Activated CD8-positive, alpha-beta T cell treated with anti-CD3 and anti-CD28 coated beads for 36 hours (primary cell): ENCODE measurements at regions of chr14 and their contacts with region 1.

Region 1: GRCh38 chr14:105045710-105046326 is 19.4 kb downstream of the GPR132 start:
- DNase-seq: peak; percentile 96
- ATAC-seq: peak; percentile 92
- H3K4me3 Mint-ChIP-seq: no peak overlapping the region
- H3K27ac Mint-ChIP-seq: peak overlapping the region; percentile 22
- H3K4me1 Mint-ChIP-seq: peaks cover 16% of the 10 kb centered on the region
- H3K27me3 Mint-ChIP-seq: peaks cover 9% of the 10 kb centered on the region
- CTCF ChIP-seq: peak; percentile 100

Region 2: GRCh38 chr14:104976198-104977007 is 69.4 kb before region 1 on chr14:
- CTCF ChIA-PET with region 1: interaction called, 87 read pairs
- POLR2A ChIA-PET with region 1: interaction called, 4 read pairs
- intact Hi-C with region 1: loop called (anchors 1 kb)
- DNase-seq: peak; percentile 87
- ATAC-seq: peak; percentile 85
- H3K4me3 Mint-ChIP-seq: no peak overlapping the region
- H3K27ac Mint-ChIP-seq: no peak overlapping the region
- H3K4me1 Mint-ChIP-seq: peaks cover 11% of the 10 kb centered on the region
- H3K27me3 Mint-ChIP-seq: peaks cover 26% of the 10 kb centered on the region
- CTCF ChIP-seq: peak; percentile 98

Region 3: DNA sequence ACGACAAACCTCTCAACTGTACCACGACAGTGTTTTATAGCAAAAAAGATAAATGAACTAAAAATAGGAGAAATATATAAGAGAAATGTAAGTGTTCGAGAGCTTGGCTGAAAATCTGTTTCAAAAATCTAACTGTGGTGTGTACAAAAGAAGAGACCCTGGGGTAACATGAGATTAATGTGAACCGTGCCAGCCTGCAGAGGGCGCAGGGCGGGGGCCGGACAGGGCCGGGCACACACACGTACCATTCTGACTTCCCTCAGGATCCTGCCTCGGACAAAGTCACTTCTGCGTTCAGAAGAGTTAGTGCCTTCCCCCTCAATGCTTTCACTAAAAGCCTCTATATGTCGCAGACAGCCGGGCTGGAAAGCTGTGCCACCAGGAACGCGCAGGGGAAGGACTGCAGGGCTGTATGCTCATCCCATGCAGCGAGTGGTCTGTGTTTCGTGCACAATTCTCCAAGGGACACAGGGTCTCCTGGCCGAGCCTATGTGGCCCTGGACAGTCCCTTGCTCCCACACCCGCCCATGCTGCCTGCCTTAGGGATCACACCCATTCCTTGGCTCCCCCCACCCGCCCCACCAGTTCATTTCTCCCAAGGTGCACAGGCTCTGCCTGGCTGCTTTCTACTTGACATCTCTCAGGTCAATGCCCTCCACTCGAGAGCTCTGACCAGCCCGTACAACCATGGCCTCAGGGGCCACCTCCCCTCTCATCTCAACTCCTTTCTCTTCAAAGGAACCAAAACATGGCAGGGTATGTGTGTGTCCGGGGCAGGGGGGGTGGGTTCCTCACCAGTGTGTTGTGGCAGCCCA is 33.4 kb before region 1 on chr14:
- CTCF ChIA-PET with region 1: interaction called, 21 read pairs
- POLR2A ChIA-PET with region 1: no interaction called
- intact Hi-C with region 1: no loop called
- DNase-seq: no peak
- ATAC-seq: no peak
- H3K4me3 Mint-ChIP-seq: no peak overlapping the region
- H3K27ac Mint-ChIP-seq: no peak overlapping the region
- H3K4me1 Mint-ChIP-seq: peaks cover 38% of the 10 kb centered on the region
- H3K27me3 Mint-ChIP-seq: no peaks in the 10 kb centered on the region
- CTCF ChIP-seq: no peak

Region 4: DNA sequence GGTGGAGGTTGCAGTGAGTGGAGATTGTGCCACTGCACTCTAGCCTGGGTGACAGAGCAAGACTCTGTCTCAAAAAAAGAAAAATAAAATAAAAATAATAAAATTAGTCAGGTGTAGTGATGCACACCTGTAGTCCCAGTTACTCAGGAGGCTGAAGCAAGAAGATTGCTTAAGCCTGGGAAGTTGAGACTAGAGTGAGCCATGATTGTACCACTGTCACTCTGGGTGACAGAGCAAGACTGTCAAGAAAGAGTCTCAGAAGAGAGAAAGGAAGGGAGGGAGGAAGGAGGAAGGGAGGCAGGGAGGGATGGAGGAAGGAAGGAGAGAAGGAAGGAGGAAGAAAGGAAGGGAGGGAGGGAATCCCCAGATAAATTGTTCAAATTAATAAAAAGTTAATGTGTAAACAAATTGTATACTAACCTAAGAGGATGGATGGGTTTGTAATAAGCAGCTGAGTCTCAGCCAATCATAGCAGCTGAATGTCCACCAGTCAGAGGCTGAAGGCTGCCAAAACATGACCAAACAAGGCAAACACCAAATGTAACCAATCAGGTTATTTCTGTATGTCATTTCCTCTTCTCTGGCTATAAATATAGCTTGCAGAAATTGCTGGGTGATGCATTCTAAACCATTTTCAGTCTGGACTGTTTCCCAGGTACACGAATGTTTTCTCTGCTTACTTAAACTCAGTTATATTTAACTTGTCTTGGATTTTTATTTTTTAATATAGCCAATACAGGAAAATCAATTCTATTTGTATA is 18.8 kb before region 1 on chr14:
- CTCF ChIA-PET with region 1: interaction called, 58 read pairs
- POLR2A ChIA-PET with region 1: interaction called, 5 read pairs
- intact Hi-C with region 1: no loop called
- DNase-seq: no peak
- ATAC-seq: no peak
- H3K4me3 Mint-ChIP-seq: no peak overlapping the region
- H3K27ac Mint-ChIP-seq: peak overlapping the region; percentile 72
- H3K4me1 Mint-ChIP-seq: peaks cover 41% of the 10 kb centered on the region
- H3K27me3 Mint-ChIP-seq: no peaks in the 10 kb centered on the region
- CTCF ChIP-seq: no peak

Region 5: GRCh38 chr14:105059035-105059924 is 13.5 kb after region 1 on chr14:
- CTCF ChIA-PET with region 1: interaction called, 32 read pairs
- POLR2A ChIA-PET with region 1: interaction called, 6 read pairs
- intact Hi-C with region 1: no loop called
- DNase-seq: peak; percentile 90
- ATAC-seq: peak; percentile 65
- H3K4me3 Mint-ChIP-seq: peak overlapping the region; percentile 86
- H3K27ac Mint-ChIP-seq: peak overlapping the region; percentile 96
- H3K4me1 Mint-ChIP-seq: peaks cover 50% of the 10 kb centered on the region
- H3K27me3 Mint-ChIP-seq: no peaks in the 10 kb centered on the region
- CTCF ChIP-seq: peak; percentile 34

Region 6: DNA sequence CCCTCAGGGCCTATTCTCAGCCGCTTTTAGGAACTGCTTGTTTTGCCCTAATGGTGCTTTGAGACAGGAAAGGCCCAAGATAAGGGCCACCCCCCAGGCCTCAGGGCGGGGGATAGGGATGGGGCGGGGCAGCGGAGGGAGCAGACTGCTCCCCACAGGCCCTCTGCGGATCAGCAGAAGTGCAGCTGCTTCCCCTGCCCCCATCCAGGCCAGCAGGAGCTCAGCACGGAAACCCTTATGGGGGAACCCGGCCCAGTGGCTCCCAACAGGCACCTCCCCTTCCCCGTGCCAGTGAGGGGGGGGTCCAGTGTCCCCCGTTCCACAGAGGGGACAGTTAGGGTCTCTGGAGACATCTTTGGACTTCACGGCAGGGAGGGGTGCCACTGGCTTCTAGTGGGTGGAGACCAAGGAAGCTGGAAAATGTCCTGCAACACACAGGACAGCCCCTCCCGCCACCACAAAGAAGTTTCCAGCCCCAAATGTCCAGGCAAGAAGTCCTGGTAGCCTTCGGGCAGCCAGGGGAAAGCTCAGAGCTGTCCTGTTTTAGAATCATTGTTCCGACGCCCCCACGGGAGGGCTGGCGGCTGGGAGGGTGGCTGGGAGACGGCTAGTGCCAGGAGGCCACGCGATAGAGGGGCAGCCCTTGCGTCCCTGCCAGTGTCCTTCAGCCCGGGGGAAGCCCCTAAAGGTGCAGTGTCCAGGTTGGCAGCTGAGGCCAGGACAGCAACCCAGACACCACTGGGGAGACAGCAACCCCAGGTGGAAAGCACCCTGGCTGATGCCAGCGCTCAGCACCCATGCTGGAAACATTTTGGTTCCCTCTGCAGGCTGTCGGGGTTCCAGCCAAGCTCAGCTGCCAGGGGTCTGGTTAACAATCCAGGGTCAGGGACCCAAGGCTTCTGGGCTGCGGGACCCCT is 29.8 kb after region 1 on chr14:
- CTCF ChIA-PET with region 1: interaction called, 13 read pairs
- POLR2A ChIA-PET with region 1: no interaction called
- intact Hi-C with region 1: no loop called
- DNase-seq: peak; percentile 77
- ATAC-seq: peak; percentile 81
- H3K4me3 Mint-ChIP-seq: no peak overlapping the region
- H3K27ac Mint-ChIP-seq: peak overlapping the region; percentile 74
- H3K4me1 Mint-ChIP-seq: peaks cover 33% of the 10 kb centered on the region
- H3K27me3 Mint-ChIP-seq: no peaks in the 10 kb centered on the region
- CTCF ChIP-seq: no peak